Endothelial cell of umbilical vein (primary cell): ENCODE measurements at regions of chr7 and their contacts with region 1.

Region 1: DNA sequence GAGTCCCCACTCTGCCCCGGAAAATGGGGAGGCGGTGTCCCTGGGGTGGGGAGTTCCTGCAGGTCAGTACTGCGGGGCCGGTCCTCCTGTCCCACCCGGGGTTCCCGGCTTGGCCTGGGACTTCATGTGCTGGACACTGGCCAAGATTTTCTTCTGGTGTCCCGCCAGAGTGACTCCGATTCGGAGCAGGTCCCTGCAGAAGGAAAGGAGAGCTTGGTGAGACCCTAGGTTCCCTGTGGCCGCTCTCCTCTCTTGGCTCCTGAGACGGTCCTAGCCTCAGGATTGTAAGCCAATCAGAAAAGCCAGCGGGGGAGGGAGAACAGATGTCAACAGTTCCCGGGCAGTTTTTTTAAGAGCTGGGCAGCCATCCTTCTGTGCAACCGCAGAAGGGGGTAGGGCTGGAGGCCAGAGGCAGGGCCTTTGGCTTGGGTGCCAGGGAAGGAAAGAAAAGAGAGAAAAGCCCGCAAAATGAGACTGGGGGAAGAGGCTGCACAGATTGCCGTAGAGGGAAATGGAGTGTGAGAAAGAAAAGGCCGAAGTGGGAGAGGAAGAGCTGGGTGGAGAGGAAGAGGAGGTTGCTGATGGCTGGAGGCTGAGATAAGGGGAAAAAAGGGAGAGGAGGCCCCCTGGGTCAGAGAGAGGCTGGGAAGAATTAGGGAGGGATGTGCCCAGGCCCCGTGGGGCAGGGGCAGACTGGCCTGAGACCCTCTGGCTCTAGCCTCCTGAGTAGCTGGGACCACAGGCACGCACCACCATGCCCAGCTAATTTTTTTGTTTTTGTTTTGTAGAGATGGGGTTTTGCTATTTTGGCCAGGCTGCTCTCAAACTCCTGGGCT is 23.7 kb downstream of the EPHB4 start:
- DNase-seq: peak; percentile 65
- H3K4me3 ChIP-seq: no peak overlapping the region
- H3K27ac ChIP-seq: no peak overlapping the region
- H3K4me1 ChIP-seq: peaks cover 44% of the 10 kb centered on the region
- H3K27me3 ChIP-seq: no peaks in the 10 kb centered on the region
- CTCF ChIP-seq: no peak
- POLR2A ChIP-seq: no peak

Region 2: DNA sequence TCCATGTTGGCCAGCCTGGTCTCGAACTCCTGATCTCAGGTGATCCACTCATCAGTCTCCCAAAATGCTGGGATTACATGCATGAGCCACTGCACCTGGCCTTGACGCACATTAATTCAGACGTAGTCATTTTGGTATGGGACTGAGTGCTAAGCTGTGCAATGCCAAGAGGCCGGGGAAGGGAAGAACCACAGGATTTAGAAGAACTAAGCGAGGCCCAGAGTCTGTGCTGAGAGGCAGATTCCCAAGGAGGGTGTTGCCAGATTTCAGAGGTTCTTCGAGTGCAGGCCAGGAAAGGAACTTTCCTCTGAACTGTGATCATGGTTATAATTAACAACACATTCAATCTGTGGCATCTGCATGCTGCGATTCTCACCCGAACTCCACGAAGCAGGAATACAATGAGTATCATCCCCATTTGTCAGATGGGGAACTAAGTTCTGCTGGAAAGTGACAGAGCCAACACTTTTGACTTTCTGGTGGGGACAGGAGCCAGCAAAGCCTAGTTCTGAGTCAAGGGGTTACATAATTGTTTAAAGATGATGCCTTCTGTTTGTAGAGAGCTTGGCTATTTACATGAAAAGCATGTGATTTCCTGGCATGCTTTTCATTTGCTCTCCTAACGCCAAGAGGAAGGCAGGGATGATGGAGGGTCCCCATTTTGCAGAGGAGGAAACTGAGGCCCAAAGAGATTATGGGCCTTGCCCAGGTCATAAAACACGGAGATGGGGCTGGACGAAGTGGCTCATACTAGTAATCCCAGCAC is 76.4 kb before region 1 on chr7:
- CTCF ChIA-PET with region 1: interaction called, 13 read pairs
- POLR2A ChIA-PET with region 1: no interaction called
- dilution Hi-C with region 1: no loop called
- intact Hi-C with region 1: no loop called
- DNase-seq: no peak
- H3K4me3 ChIP-seq: no peak overlapping the region
- H3K27ac ChIP-seq: no peak overlapping the region
- H3K4me1 ChIP-seq: no peaks in the 10 kb centered on the region
- H3K27me3 ChIP-seq: peaks cover 4 to 11% of the 10 kb centered on the region in 2 experiments
- CTCF ChIP-seq: no peak
- POLR2A ChIP-seq: no peak

Region 3: GRCh38 chr7:100827330-100828227 is 24.0 kb after region 1 on chr7 and contains the start of gene EPHB4:
- CTCF ChIA-PET with region 1: interaction called, 67 read pairs
- POLR2A ChIA-PET with region 1: interaction called, 3 read pairs
- dilution Hi-C with region 1: no loop called
- intact Hi-C with region 1: loop called (anchors 1 kb)
- DNase-seq: peak; percentile 88
- H3K4me3 ChIP-seq: peak within 1 kb of the TSS; percentile 88 to 92 (median 90)
- H3K27ac ChIP-seq: peak within 1 kb of the TSS; percentile 94
- H3K4me1 ChIP-seq: peaks cover 23% of the 10 kb centered on the region
- H3K27me3 ChIP-seq: no peaks in the 10 kb centered on the region
- CTCF ChIP-seq: peak; percentile 42 to 62
- POLR2A ChIP-seq: peak; percentile 17
- total RNA-seq, gene EPHB4: 148 and 193 TPM in 2 replicates

Region 4: GRCh38 chr7:100837099-100837836 is 33.7 kb after region 1 on chr7:
- CTCF ChIA-PET with region 1: interaction called, 17 read pairs
- POLR2A ChIA-PET with region 1: interaction called, 3 read pairs
- dilution Hi-C with region 1: no loop called
- intact Hi-C with region 1: no loop called
- DNase-seq: peak; percentile 92
- H3K4me3 ChIP-seq: peak overlapping the region in 1 of 3 experiments; percentile 10
- H3K27ac ChIP-seq: peak overlapping the region; percentile 82
- H3K4me1 ChIP-seq: peaks cover 16% of the 10 kb centered on the region
- H3K27me3 ChIP-seq: no peaks in the 10 kb centered on the region
- CTCF ChIP-seq: no peak
- POLR2A ChIP-seq: peak; percentile 77

Region 5: GRCh38 chr7:100867040-100867775 is 63.6 kb after region 1 on chr7 and contains the start of gene TRIP6:
- CTCF ChIA-PET with region 1: interaction called, 6 read pairs
- POLR2A ChIA-PET with region 1: no interaction called
- dilution Hi-C with region 1: no loop called
- intact Hi-C with region 1: loop called (anchors 5 kb)
- DNase-seq: peak; percentile 76
- H3K4me3 ChIP-seq: peak within 1 kb of the TSS; percentile 72 to 93 (median 87)
- H3K27ac ChIP-seq: peak within 1 kb of the TSS; percentile 90
- H3K4me1 ChIP-seq: peaks cover 36% of the 10 kb centered on the region
- H3K27me3 ChIP-seq: no peaks in the 10 kb centered on the region
- CTCF ChIP-seq: no peak
- POLR2A ChIP-seq: peak; percentile 82
- total RNA-seq, gene TRIP6: 84.5 and 90.3 TPM in 2 replicates